ENCODE measurements at regions of chr1 and their contacts with region 1.

Region 1: DNA sequence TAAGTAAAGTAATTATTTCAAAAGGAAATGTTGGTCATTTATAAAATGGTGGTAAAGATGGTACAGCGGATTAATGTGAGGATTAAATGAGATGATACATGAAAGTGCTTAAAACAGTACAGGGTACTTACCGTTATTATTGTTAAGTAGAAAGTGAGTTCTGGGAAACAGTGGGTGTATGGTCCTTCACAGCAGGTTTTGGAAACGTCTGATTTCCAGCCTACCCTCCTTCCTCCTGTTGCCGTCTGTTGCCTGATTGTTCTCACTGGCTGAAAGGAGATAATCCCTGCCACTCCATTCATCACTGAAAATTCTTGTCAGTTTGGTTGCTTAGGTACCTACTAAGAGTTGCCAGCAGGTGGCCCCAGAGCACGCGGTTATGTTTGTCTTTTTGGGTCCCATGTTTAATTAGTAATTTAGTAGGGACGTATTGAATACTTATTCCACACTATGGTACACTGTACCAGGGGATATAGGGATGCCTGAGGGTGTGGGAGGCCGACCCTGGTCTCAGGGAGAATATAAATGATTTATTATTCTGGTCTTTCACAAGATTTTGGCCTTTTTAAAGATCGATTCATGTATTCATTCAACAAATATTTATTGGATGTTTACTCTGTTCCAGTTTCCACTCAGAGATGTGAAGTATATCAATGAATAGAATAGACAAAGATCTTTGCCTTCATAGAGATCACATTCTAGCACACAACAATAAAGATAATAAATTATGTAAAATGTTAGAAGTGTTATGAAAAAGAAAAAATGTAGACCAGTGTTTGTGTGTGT is 30.8 kb upstream of the RPTN start:
- DNase-seq: peak; percentile 17 to 65 (median 45)
- ATAC-seq: peak; percentile 78
- H3K4me3 ChIP-seq: peak overlapping the region; percentile 63
- H3K4me3 Mint-ChIP-seq: peak overlapping the region; percentile 62 to 88 (median 80)
- H3K27ac ChIP-seq: no peak overlapping the region
- H3K27ac Mint-ChIP-seq: peak overlapping the region in 3 of 9 donors; percentile 4 to 43 (median 26)
- H3K4me1 ChIP-seq: no peaks in the 10 kb centered on the region
- H3K4me1 Mint-ChIP-seq: peaks cover 0 to 9% (median 6%) of the 10 kb centered on the region in 7 donors
- H3K27me3 ChIP-seq: no peaks in the 10 kb centered on the region
- H3K27me3 Mint-ChIP-seq: peaks cover 0 to 45% (median 5%) of the 10 kb centered on the region in 5 donors

Region 2: DNA sequence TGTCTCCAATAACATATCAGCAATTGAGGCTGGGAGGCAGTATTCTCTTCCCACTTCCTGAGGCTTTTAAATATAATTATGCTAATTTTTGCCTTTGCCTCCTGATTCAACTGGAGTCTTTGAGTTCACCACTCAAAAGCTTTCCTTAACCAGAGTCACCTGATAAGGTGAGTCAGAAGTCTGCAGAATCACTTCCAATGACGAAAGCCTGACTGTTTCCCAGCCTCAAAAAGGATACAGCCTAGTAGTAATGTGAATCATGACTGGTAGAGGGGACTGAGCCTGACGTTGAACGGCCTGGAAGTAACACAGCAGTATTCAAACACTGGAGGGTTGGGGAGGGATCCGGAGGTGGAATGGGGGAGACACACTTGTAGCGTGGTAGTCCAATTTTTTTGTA is 416.1 kb before region 1 on chr1:
- CTCF ChIA-PET with region 1: no interaction called
- POLR2A ChIA-PET with region 1: no interaction called
- intact Hi-C with region 1: no loop called
- DNase-seq: no peak
- ATAC-seq: no peak
- H3K4me3 ChIP-seq: no peak overlapping the region
- H3K4me3 Mint-ChIP-seq: no peak overlapping the region
- H3K27ac ChIP-seq: no peak overlapping the region
- H3K27ac Mint-ChIP-seq: peak overlapping the region in 1 of 9 donors; percentile 10
- H3K4me1 ChIP-seq: no peaks in the 10 kb centered on the region
- H3K4me1 Mint-ChIP-seq: no peaks in the 10 kb centered on the region
- H3K27me3 ChIP-seq: no peaks in the 10 kb centered on the region
- H3K27me3 Mint-ChIP-seq: no peaks in the 10 kb centered on the region

Region 3: DNA sequence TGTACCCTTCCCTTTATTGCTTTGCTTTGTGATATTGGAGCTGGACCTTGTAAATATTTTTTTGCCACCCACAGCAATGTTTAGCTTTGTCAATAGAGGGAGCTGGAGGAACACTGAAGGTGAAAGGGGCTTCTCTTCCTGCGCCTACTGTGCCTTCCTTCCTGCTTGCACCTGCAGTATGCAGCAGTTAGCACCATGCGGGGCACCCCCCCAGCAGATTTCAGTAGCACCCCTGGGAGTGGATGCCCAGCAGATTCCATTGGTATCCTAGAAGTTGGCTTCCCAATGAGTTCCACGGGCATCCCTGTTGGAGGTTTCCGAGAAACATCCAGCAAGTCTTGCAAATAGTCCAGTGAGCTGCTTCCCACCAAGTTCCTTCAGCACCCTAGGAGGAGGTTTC is 221.8 kb before region 1 on chr1:
- CTCF ChIA-PET with region 1: no interaction called
- POLR2A ChIA-PET with region 1: no interaction called
- intact Hi-C with region 1: loop called in 1 of 2 experiments (anchors 10 kb)
- DNase-seq: peak in 8 of 9 donors; percentile 39 to 76 (median 68)
- ATAC-seq: peak; percentile 93
- H3K4me3 ChIP-seq: no peak overlapping the region
- H3K4me3 Mint-ChIP-seq: no peak overlapping the region
- H3K27ac ChIP-seq: no peak overlapping the region
- H3K27ac Mint-ChIP-seq: no peak overlapping the region
- H3K4me1 ChIP-seq: peaks cover 4 to 5% of the 10 kb centered on the region in 2 donors
- H3K4me1 Mint-ChIP-seq: peaks cover 5 to 20% (median 7%) of the 10 kb centered on the region in 7 donors
- H3K27me3 ChIP-seq: no peaks in the 10 kb centered on the region
- H3K27me3 Mint-ChIP-seq: peaks cover 0 to 20% (median 0%) of the 10 kb centered on the region in 5 donors

Region 4: GRCh38 chr1:152110860-152111514 is 78.9 kb before region 1 on chr1:
- CTCF ChIA-PET with region 1: interaction called, 3 read pairs
- POLR2A ChIA-PET with region 1: no interaction called
- intact Hi-C with region 1: loop called in 1 of 2 experiments (anchors 2 kb)
- DNase-seq: peak in 3 of 9 donors; percentile 10 to 42 (median 25)
- ATAC-seq: peak; percentile 52
- H3K4me3 ChIP-seq: peak overlapping the region; percentile 63
- H3K4me3 Mint-ChIP-seq: no peak overlapping the region
- H3K27ac ChIP-seq: no peak overlapping the region
- H3K27ac Mint-ChIP-seq: no peak overlapping the region
- H3K4me1 ChIP-seq: peaks cover 23 to 28% of the 10 kb centered on the region in 2 donors
- H3K4me1 Mint-ChIP-seq: peaks cover 0 to 12% (median 0%) of the 10 kb centered on the region in 7 donors
- H3K27me3 ChIP-seq: peaks cover 4 to 55% of the 10 kb centered on the region in 2 donors
- H3K27me3 Mint-ChIP-seq: peaks cover 3 to 28% (median 5%) of the 10 kb centered on the region in 5 donors

Region 5: GRCh38 chr1:152179566-152179965 is 10.3 kb before region 1 on chr1:
- CTCF ChIA-PET with region 1: interaction called, 19 read pairs
- POLR2A ChIA-PET with region 1: interaction called, 3 read pairs
- intact Hi-C with region 1: no loop called
- DNase-seq: no peak
- ATAC-seq: no peak
- H3K4me3 ChIP-seq: no peak overlapping the region
- H3K4me3 Mint-ChIP-seq: no peak overlapping the region
- H3K27ac ChIP-seq: no peak overlapping the region
- H3K27ac Mint-ChIP-seq: no peak overlapping the region
- H3K4me1 ChIP-seq: no peaks in the 10 kb centered on the region
- H3K4me1 Mint-ChIP-seq: peaks cover 0 to 1% (median 0%) of the 10 kb centered on the region in 7 donors
- H3K27me3 ChIP-seq: no peaks in the 10 kb centered on the region
- H3K27me3 Mint-ChIP-seq: peaks cover 9 to 26% (median 21%) of the 10 kb centered on the region in 5 donors

Region 6: GRCh38 chr1:152440635-152441471 is 251.0 kb after region 1 on chr1:
- CTCF ChIA-PET with region 1: interaction called, 3 read pairs
- POLR2A ChIA-PET with region 1: no interaction called
- intact Hi-C with region 1: loop called (anchors 1 to 5 kb)
- DNase-seq: peak; percentile 32 to 72 (median 59)
- ATAC-seq: peak; percentile 96
- H3K4me3 ChIP-seq: no peak overlapping the region
- H3K4me3 Mint-ChIP-seq: no peak overlapping the region
- H3K27ac ChIP-seq: no peak overlapping the region
- H3K27ac Mint-ChIP-seq: peak overlapping the region in 4 of 9 donors; percentile 42 to 72 (median 46)
- H3K4me1 ChIP-seq: no peaks in the 10 kb centered on the region
- H3K4me1 Mint-ChIP-seq: peaks cover 0 to 8% (median 0%) of the 10 kb centered on the region in 7 donors
- H3K27me3 ChIP-seq: no peaks in the 10 kb centered on the region
- H3K27me3 Mint-ChIP-seq: peaks cover 15 to 30% (median 23%) of the 10 kb centered on the region in 5 donors

Measured in naive thymus-derived CD4-positive, alpha-beta T cell (primary cell).